HepG2 (cell line): ENCODE measurements at regions of chr21 and their contacts with region 1.

Region 1: DNA sequence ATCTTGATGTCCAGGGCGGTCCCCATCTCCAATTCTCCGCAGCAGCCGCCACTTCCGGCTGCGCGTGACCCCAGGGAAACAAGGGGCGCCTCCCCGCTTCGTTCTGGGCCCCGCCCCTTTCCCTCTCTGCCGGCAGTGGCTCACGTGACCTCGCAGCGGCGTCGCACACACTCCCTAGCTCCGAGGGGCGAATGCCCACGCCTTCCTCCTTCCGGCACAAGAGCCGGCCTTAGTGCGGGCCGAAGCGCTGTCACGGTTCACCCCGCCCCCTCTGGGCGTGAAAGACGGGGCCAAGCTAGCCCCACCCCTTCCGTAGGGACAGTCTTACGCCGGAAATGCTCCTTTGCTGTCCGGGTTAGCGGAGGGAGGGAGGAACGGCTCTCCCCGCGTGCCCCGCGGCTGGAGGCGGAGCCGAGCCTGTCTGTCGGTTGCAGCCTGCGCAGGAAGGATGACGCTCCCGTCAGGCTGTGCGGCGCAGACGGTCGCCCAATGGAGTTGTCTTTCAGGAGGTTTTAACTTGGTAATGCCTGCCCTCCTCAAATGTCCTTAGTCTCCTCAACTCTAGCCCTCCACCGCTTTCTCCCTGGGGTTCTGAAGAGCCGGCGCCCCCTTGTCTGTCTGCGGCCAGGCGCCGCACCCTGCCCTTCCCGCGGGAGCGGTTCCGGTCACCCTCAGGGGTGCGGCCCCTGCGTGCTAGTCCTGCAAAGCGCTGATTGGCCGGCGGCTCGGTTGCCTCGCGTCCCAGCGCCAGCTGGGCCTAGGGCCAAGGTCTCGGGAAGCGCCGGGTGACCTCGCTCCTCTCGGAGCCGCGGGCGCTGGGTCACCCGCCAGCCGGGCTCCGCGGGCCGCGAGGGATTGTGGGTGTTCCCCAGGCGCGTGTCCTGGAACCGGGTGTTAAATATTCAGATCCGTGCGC is at the start of gene VPS26C:
- DNase-seq: peak; percentile 97
- ATAC-seq: peak; percentile 91
- H3K4me3 ChIP-seq: peak within 1 kb of the TSS; percentile 70 to 90 (median 88)
- H3K27ac ChIP-seq: peak within 1 kb of the TSS; percentile 97
- H3K4me1 ChIP-seq: peaks cover 41% of the 10 kb centered on the region
- H3K27me3 ChIP-seq: no peaks in the 10 kb centered on the region
- CTCF ChIP-seq: peak; percentile 2; the same call in 1 of the 2 replicates
- EP300 ChIP-seq: no peak
- POLR2A ChIP-seq: peak; percentile 76 to 94
- RAD21 ChIP-seq: 0 out of 2 replicates have a peak, but pooled peaks have one; percentile 8
- total RNA-seq, gene VPS26C: 39.7 and 54.6 TPM in 2 replicates

Region 2: DNA sequence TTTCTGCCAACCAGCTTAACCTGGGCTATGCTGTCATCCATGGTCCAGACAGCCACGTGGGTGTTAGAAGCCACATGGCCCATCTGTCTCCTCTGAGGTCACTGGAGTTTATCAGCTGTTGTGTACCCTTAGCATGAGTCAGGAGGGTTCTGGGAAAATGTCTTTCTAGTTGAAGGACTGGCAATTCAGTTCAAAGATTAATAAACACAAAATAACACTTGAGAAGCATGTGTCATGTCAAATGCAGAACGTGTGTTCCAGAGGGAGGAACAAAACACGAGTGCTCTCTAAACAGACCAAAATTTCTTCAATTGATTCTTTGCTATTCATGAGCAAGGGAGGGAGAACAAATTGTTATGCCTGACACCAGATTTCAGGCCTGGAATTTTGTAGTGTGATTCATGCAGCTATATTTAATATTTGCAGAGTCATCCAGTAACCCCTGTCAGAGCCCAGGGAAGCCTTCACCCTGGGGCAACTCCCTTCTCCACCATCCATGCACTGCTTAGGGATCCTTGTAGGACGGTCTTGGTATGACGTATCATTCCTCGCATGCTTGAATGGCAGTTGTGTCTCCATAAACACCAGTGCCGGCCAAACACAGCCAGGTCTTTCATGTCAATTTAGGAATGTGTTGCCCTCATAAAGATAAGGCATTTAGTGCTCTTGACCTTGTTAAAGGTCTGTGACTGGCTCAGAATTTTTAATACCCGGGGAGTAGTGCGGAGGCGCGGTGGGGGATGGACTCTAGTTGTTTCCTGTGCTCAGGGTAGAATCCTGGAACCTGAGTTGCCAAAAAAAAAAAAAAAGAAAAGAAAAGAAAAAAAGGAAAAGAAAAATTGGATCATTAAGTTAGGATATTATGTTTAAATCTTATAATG is 71.4 kb after region 1 on chr21:
- CTCF ChIA-PET with region 1: no interaction called
- POLR2A ChIA-PET with region 1: interaction called, 11 read pairs
- in situ Hi-C with region 1: no loop called
- intact Hi-C with region 1: no loop called
- DNase-seq: peak; percentile 79
- ATAC-seq: peak; percentile 90
- H3K4me3 ChIP-seq: no peak overlapping the region; a peak in 1 of 6 replicates
- H3K27ac ChIP-seq: no peak overlapping the region
- H3K4me1 ChIP-seq: peaks cover 16% of the 10 kb centered on the region
- H3K27me3 ChIP-seq: no peaks in the 10 kb centered on the region; a peak in 1 of 5 replicates
- CTCF ChIP-seq: no peak
- EP300 ChIP-seq: peak in 1 of 2 experiments; percentile 61; a peak in 1 of 4 replicates
- POLR2A ChIP-seq: no peak
- RAD21 ChIP-seq: no peak

Region 3: GRCh38 chr21:37366482-37367316 is 99.2 kb after region 1 on chr21 and contains the start of gene DYRK1A:
- CTCF ChIA-PET with region 1: no interaction called
- POLR2A ChIA-PET with region 1: interaction called, 44 read pairs
- in situ Hi-C with region 1: loop called (anchors 5 kb)
- intact Hi-C with region 1: loop called (anchors 1 kb)
- DNase-seq: peak; percentile 99
- ATAC-seq: peak; percentile 82
- H3K4me3 ChIP-seq: peak within 1 kb of the TSS; percentile 92 to 99 (median 97)
- H3K27ac ChIP-seq: peak within 1 kb of the TSS; percentile 99
- H3K4me1 ChIP-seq: peaks cover 34% of the 10 kb centered on the region
- H3K27me3 ChIP-seq: no peaks in the 10 kb centered on the region; a peak in 1 of 5 replicates
- CTCF ChIP-seq: no peak
- EP300 ChIP-seq: peak; percentile 16 to 34; a peak in 2 of 4 replicates
- POLR2A ChIP-seq: peak in 1 of 2 experiments; percentile 64; a peak in 2 of 4 replicates
- RAD21 ChIP-seq: no peak
- total RNA-seq, gene DYRK1A: 32.7 and 34.2 TPM in 2 replicates

Region 4: DNA sequence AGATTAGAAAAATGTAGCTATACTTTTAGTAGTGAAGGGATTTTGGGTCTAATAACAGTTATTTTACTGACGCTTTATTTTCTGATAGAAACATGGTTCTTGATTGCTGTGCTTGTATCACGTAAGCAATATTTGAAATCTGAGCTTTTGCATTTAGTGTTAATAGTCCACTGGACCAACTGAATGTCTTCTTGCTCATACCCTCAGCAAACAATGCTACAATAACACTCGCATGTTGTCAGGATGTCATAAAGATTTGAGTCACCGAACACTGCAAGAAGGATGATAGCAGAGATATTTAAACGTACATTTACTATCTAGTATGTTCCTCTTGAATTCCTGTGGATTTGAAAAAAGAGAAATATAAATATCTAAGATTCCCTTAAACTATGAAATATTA is 106.5 kb after region 1 on chr21:
- CTCF ChIA-PET with region 1: no interaction called
- POLR2A ChIA-PET with region 1: interaction called, 12 read pairs
- in situ Hi-C with region 1: loop called (anchors 5 kb)
- intact Hi-C with region 1: no loop called
- DNase-seq: no peak
- ATAC-seq: no peak
- H3K4me3 ChIP-seq: no peak overlapping the region
- H3K27ac ChIP-seq: no peak overlapping the region
- H3K4me1 ChIP-seq: peaks cover 89% of the 10 kb centered on the region
- H3K27me3 ChIP-seq: no peaks in the 10 kb centered on the region
- CTCF ChIP-seq: no peak
- EP300 ChIP-seq: no peak
- POLR2A ChIP-seq: no peak
- RAD21 ChIP-seq: no peak

Region 5: GRCh38 chr21:38196036-38196435 is 928.5 kb after region 1 on chr21:
- CTCF ChIA-PET with region 1: no interaction called
- POLR2A ChIA-PET with region 1: no interaction called
- in situ Hi-C with region 1: no loop called
- intact Hi-C with region 1: no loop called
- DNase-seq: no peak
- ATAC-seq: no peak
- H3K4me3 ChIP-seq: no peak overlapping the region
- H3K27ac ChIP-seq: no peak overlapping the region
- H3K4me1 ChIP-seq: no peaks in the 10 kb centered on the region
- H3K27me3 ChIP-seq: no peaks in the 10 kb centered on the region
- CTCF ChIP-seq: no peak
- EP300 ChIP-seq: no peak
- POLR2A ChIP-seq: no peak
- RAD21 ChIP-seq: no peak